ENCODE measurements at regions of chr20 and their contacts with region 1.

Region 1: GRCh38 chr20:50744143-50744792 is 12.9 kb downstream of the PARD6B start:
- DNase-seq: peak; percentile 90
- H3K4me3 ChIP-seq: no peak overlapping the region
- H3K27ac ChIP-seq: peak overlapping the region; percentile 79 to 87 (median 84)
- H3K4me1 ChIP-seq: peaks cover 0 to 46% (median 35%) of the 10 kb centered on the region in 4 donors
- H3K27me3 ChIP-seq: no peaks in the 10 kb centered on the region
- CTCF ChIP-seq: peak in 1 of 4 experiments; percentile 41
- EP300 ChIP-seq: no peak
- POLR2A ChIP-seq: no peak

Region 2: GRCh38 chr20:50484276-50484976 is 259.8 kb before region 1 on chr20:
- intact Hi-C with region 1: loop called (anchors 10 kb)
- DNase-seq: no peak
- H3K4me3 ChIP-seq: peak overlapping the region in 3 of 4 donors; percentile 52 to 57 (median 52)
- H3K27ac ChIP-seq: peak overlapping the region; percentile 83 to 88 (median 84)
- H3K4me1 ChIP-seq: peaks cover 0 to 14% (median 8%) of the 10 kb centered on the region in 4 donors
- H3K27me3 ChIP-seq: no peaks in the 10 kb centered on the region
- CTCF ChIP-seq: no peak
- EP300 ChIP-seq: no peak
- POLR2A ChIP-seq: no peak

Region 3: DNA sequence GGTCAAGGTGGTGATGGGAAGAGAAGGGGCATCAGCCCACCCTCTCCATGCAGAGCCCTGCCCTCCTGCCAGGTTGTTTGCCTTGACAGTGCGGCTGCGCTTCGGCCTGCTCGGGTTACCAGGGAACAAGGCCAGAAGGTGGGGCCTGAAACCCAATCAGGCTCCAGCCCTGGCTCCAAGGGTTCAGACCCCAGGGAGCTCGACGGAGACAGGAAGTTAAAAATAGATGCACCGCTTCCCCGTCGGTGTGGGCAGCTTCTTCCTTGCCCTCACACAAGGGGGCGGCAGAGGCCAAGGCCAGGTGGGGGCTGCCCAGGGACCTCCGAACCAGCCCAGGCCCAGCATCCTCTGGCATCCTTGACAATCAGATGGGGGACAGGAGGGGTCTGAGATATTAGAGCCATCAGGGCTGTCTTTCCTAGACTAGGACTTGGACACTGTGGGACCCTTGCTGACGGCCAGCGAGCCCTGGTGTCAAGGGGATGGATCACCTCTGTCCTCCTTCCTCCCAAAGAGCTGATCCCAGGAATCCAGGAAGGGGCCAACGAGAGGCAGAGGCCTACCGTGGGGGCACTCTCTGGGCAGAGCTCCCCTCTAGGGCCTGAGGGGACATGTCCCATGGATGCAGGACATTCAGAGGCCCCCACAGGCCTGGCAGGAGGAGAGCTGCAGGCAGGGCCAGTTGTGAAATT is 118.1 kb before region 1 on chr20:
- intact Hi-C with region 1: loop called (anchors 2 kb)
- DNase-seq: peak; percentile 89
- H3K4me3 ChIP-seq: no peak overlapping the region
- H3K27ac ChIP-seq: peak overlapping the region; percentile 5 to 32 (median 18)
- H3K4me1 ChIP-seq: peaks cover 0 to 11% (median 4%) of the 10 kb centered on the region in 4 donors
- H3K27me3 ChIP-seq: no peaks in the 10 kb centered on the region
- CTCF ChIP-seq: peak; percentile 38 to 79 (median 55)
- EP300 ChIP-seq: no peak
- POLR2A ChIP-seq: no peak

Region 4: GRCh38 chr20:50655311-50655880 is 88.9 kb before region 1 on chr20:
- intact Hi-C with region 1: loop called (anchors 5 kb)
- DNase-seq: peak; percentile 94
- H3K4me3 ChIP-seq: peak overlapping the region; percentile 11 to 35 (median 23)
- H3K27ac ChIP-seq: peak overlapping the region; percentile 78 to 92 (median 88)
- H3K4me1 ChIP-seq: peaks cover 0 to 39% (median 25%) of the 10 kb centered on the region in 4 donors
- H3K27me3 ChIP-seq: no peaks in the 10 kb centered on the region
- CTCF ChIP-seq: no peak
- EP300 ChIP-seq: peak in 2 of 4 donors; percentile 34 to 81
- POLR2A ChIP-seq: no peak

Region 5: DNA sequence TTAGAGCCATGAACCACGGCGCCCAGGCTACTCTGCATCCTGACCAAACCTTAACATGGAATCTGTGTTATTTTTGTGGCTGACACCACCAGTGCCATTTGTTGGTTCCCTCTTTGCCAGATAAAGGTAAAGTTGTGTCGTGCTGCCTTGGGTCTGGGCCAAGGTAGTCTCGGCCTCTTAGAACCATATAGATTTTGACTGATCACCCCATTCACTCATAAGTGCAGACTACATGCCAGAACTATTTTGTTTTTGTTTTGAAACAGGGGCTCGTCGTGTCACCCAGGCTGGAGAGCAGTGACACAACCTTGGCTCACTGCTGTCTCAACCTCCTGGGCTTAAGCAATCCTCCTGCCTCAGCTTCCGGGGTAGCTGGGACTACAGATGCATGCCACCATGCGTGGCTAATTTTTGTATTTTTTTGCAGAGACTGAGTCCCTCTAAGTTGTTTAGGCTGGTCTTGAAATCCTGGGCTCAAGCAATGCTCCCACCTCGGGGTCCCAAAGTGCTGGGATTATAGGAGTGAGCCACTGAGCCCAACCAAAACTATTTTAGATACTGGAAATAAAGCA is 33.7 kb before region 1 on chr20:
- intact Hi-C with region 1: no loop called
- DNase-seq: no peak
- H3K4me3 ChIP-seq: no peak overlapping the region
- H3K27ac ChIP-seq: no peak overlapping the region
- H3K4me1 ChIP-seq: no peaks in the 10 kb centered on the region
- H3K27me3 ChIP-seq: no peaks in the 10 kb centered on the region
- CTCF ChIP-seq: no peak
- EP300 ChIP-seq: no peak
- POLR2A ChIP-seq: no peak

Region 6: DNA sequence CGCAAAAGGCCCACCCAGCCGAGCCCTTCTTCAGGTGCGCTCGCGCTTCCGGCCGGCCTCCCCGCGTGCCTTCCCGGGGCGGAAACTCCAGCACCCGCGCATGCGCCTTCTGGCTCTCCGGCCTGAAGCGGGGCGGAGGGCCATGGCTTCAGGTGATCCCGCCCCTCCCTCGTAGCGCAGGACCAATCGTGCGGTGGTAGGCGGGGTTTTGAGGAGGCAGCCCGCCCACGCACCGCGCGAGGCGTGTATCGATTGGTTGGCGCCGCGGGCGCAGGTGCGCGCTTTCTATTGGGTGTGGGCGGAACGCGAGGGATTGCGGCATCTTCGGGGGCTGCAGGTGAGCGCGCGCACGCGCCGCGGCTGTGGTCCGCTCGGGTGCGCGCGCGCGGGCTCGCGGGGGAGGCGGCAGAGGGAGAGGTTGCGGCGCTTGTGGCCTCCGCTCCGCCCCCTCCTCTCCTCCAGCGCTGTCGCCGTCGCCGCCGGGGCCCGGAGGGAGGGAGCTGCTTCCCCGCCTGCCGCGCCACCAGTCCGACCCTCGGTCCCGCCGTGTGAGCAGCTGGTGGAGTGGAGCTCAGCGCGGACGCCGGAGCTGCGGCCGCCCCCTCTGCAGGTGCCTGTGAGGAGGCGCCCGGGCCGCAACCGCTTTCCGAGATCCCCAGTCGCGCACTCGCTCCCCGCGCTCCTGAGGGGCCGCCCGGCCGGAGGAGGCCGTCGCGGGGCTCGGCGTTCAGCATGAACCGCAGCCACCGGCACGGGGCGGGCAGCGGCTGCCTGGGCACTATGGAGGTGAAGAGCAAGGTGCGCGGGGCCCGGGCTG is 13.0 kb before region 1 on chr20 and contains the start of gene PARD6B:
- intact Hi-C with region 1: loop called (anchors 2 kb)
- DNase-seq: peak; percentile 98
- H3K4me3 ChIP-seq: peak within 1 kb of the TSS; percentile 69 to 95 (median 88)
- H3K27ac ChIP-seq: peak within 1 kb of the TSS; percentile 75 to 80 (median 78)
- H3K4me1 ChIP-seq: peaks cover 0 to 19% (median 14%) of the 10 kb centered on the region in 4 donors
- H3K27me3 ChIP-seq: no peaks in the 10 kb centered on the region
- CTCF ChIP-seq: no peak
- EP300 ChIP-seq: peak in 1 of 4 donors; percentile 17
- POLR2A ChIP-seq: no peak
- total RNA-seq, gene PARD6B: 0.83 to 1.8 (median 1.2) TPM

Region 7: DNA sequence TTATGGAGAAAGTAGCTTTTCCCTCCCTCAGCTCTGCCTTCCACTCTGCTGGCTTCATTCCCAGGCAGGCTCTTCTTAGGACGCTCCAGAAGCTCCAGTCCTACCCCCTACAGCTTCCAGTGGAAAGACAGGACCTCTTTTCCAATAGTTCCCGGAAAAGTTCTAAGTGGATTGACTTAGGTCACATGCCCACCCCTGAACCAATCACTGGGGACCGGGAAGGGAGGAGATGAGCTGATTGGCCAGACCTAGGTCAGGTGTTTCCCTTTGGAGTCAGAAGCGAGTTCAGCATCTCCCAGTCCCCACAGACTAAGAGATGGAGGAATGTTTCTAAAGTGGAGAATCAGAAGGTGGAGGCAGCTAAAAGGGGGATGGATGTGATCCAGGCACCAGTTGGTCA is 341.5 kb after region 1 on chr20:
- intact Hi-C with region 1: no loop called
- DNase-seq: no peak
- H3K4me3 ChIP-seq: no peak overlapping the region
- H3K27ac ChIP-seq: no peak overlapping the region
- H3K4me1 ChIP-seq: no peaks in the 10 kb centered on the region
- H3K27me3 ChIP-seq: peaks cover 0 to 44% (median 5%) of the 10 kb centered on the region in 3 donors
- CTCF ChIP-seq: no peak
- EP300 ChIP-seq: no peak
- POLR2A ChIP-seq: no peak

Region 8: DNA sequence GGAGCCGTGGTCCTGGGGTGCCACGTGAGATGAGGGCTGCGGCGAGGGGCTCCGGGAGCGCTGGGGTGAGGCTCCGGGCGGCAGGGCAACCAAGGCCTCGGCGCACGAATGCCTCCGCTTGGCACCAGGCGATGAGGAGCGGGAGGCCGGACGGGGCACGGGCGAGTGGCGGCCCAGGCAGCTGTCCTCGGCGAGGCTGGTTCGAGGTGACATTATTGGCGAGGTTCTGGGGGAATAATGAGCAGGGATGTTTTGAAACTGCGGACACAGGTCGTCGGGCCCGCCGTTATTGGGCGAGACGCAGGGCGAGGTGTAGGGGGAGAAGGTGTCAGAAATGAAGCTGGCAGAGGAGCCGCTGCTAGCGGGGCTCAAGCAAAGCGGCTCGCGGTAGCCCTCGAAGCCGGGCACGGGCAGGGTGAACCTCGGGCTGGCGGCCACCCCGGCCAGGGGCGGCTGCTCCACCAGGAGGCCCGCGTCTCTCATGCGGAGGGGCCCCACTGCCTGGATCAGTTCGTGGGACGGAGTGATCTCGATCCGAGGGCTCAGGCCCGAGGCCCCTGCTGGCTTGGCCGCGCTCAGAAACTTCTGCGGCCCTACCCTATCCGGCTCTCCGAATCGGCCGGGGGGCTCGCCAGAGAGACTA is 779.2 kb after region 1 on chr20:
- intact Hi-C with region 1: no loop called
- DNase-seq: no peak
- H3K4me3 ChIP-seq: no peak overlapping the region
- H3K27ac ChIP-seq: no peak overlapping the region
- H3K4me1 ChIP-seq: no peaks in the 10 kb centered on the region
- H3K27me3 ChIP-seq: no peaks in the 10 kb centered on the region
- CTCF ChIP-seq: no peak
- EP300 ChIP-seq: no peak
- POLR2A ChIP-seq: no peak